OCI-LY7 (cell line): ENCODE measurements at regions of chr5 and their contacts with region 1.

Region 1: DNA sequence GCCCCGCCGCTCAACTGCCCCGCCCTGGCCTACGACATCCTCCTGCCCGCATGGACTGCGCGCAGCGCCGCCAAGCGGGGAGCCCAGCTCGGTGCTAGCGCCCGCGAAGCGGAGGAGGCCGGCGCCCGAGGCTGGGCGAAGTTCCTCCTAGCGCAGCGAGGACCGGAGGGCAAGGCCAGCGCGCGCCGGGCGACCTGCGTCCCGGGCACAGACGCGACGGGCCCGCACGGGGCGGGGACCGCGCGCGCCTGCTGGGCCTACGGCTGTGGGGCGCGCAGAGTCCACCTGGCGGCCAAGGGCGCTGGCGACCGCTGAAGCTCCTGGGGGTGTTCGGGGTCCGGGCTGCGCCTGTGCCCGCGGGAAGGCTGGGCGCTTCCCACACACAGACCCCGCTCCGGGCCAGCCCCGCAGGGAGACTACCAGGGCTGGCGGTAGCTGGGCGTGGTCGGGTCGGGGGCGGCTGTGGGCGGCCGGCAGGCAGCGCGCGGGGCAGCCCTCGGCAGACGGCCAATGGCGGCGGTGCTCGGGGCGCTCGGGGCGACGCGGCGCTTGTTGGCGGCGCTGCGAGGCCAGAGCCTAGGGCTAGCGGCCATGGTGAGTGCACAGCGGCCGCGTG is at the start of gene PCBD2:
- DNase-seq: peak; percentile 96
- H3K4me3 ChIP-seq: peak within 1 kb of the TSS; percentile 82
- H3K27ac ChIP-seq: peak within 1 kb of the TSS; percentile 93
- H3K4me1 ChIP-seq: peaks cover 41% of the 10 kb centered on the region
- CTCF ChIP-seq: peak; percentile 84
- total RNA-seq, gene PCBD2: 9.4 and 12.2 TPM in 2 replicates

Region 2: DNA sequence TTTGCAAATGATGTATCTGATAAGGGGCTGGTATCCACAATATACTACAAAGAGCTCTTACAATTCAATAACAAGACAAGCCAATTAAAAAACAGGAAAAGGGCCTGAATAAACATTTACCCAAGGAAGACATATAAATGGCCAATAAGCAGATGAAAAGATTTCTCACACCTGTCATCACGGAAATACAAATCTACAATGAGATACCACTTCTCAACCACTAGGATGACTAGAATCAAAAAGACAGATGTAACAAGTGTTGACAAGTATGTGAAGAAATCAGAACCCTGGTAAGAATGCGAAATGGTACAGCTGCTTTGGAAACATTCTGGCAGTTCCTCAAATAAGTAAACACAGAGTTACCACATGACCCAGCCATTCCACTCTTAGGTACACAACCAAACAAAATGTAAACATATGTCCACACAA is 1998.9 kb before region 1 on chr5:
- CTCF ChIA-PET with region 1: no interaction called
- POLR2A ChIA-PET with region 1: no interaction called
- intact Hi-C with region 1: no loop called
- DNase-seq: peak; percentile 15
- H3K4me3 ChIP-seq: no peak overlapping the region
- H3K27ac ChIP-seq: no peak overlapping the region
- H3K4me1 ChIP-seq: peaks cover 31% of the 10 kb centered on the region
- CTCF ChIP-seq: peak; percentile 31; the same call in 1 of the 2 replicates

Region 3: GRCh38 chr5:134527146-134527960 is 377.4 kb before region 1 on chr5:
- CTCF ChIA-PET with region 1: no interaction called
- POLR2A ChIA-PET with region 1: interaction called, 3 read pairs
- intact Hi-C with region 1: loop called (anchors 10 kb)
- DNase-seq: peak; percentile 88
- H3K4me3 ChIP-seq: peak overlapping the region; percentile 77
- H3K27ac ChIP-seq: peak overlapping the region; percentile 88
- H3K4me1 ChIP-seq: peaks cover 30% of the 10 kb centered on the region
- CTCF ChIP-seq: peak; percentile 82

Region 4: GRCh38 chr5:134603059-134603458 is 301.7 kb before region 1 on chr5:
- CTCF ChIA-PET with region 1: no interaction called
- POLR2A ChIA-PET with region 1: no interaction called
- intact Hi-C with region 1: no loop called
- DNase-seq: no peak
- H3K4me3 ChIP-seq: no peak overlapping the region
- H3K27ac ChIP-seq: no peak overlapping the region
- H3K4me1 ChIP-seq: no peaks in the 10 kb centered on the region
- CTCF ChIP-seq: no peak

Region 5: DNA sequence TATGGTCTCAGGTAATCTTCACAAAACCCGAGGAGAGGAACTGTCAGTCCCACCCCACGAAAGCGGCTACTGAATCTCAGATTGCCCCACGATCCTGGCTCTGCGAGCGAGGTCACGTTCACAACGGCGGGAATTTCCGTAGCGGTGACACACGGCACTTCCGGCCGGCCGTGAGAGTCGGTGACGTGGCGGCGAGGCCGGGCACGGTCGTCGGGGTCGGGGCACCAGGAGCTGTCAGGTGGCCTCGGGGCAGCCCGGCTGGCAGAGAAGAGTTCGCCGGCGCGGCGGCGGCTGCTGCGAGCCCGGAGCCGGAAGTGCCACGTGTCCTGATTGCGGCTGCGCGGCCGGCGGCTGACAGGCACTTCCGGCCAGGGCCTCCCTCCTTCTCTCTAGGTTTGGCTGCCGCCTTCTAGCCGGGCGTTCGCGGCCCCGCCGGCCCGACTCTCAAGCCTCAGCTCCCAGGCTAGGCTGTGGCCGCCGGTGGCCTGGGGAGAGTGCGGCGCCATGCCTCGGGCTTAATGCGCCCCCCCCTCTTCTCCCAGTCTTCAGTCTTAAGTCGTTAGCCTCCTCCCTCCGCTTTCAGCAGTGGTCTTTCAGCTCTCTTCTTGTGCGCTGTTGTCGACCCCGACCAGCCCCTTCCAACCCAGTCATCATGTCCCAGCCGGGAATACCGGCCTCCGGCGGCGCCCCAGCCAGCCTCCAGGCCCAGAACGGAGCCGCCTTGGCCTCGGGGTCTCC is 256.1 kb before region 1 on chr5 and contains the start of gene SEC24A:
- CTCF ChIA-PET with region 1: no interaction called
- POLR2A ChIA-PET with region 1: no interaction called
- intact Hi-C with region 1: loop called (anchors 5 kb)
- DNase-seq: peak; percentile 93
- H3K4me3 ChIP-seq: peak within 1 kb of the TSS; percentile 83
- H3K27ac ChIP-seq: peak within 1 kb of the TSS; percentile 95
- H3K4me1 ChIP-seq: peaks cover 31% of the 10 kb centered on the region
- CTCF ChIP-seq: no peak
- total RNA-seq, gene SEC24A: 5.5 and 5.6 TPM in 2 replicates

Region 6: DNA sequence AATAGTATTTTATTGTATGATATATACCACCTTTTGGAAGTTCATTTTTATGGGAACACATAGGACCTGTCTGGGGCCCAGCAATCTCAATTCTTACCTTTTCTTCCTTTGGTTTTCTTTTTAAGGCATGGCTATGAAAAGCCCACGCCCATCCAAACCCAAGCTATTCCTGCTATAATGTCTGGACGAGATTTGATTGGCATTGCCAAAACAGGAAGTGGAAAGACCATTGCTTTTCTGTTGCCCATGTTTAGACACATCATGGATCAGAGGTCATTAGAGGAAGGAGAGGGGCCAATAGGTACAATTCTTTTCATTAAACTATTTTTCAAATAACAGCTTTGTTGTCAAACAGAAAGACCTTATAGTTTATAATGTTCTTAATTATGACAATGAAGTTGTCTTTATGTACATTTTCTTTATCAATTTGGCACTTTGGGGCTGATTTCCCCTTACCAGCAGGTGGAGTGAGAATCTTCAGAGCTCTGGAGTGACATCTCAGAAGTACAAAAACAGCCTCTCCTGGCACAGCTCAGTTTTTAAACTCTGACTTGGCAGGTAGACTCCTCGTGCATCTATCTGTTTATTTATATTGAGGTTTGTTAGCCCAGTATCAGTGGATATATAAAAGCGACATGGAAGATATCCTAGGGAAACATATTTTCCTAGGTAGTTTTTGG is 120.4 kb before region 1 on chr5:
- CTCF ChIA-PET with region 1: no interaction called
- POLR2A ChIA-PET with region 1: no interaction called
- intact Hi-C with region 1: loop called (anchors 1 kb)
- DNase-seq: peak; percentile 26
- H3K4me3 ChIP-seq: no peak overlapping the region
- H3K27ac ChIP-seq: no peak overlapping the region
- H3K4me1 ChIP-seq: no peaks in the 10 kb centered on the region
- CTCF ChIP-seq: peak; percentile 66

Region 7: GRCh38 chr5:134833340-134834032 is 71.3 kb before region 1 on chr5:
- CTCF ChIA-PET with region 1: no interaction called
- POLR2A ChIA-PET with region 1: no interaction called
- intact Hi-C with region 1: no loop called
- DNase-seq: no peak
- H3K4me3 ChIP-seq: no peak overlapping the region
- H3K27ac ChIP-seq: no peak overlapping the region
- H3K4me1 ChIP-seq: no peaks in the 10 kb centered on the region
- CTCF ChIP-seq: no peak

Region 8: DNA sequence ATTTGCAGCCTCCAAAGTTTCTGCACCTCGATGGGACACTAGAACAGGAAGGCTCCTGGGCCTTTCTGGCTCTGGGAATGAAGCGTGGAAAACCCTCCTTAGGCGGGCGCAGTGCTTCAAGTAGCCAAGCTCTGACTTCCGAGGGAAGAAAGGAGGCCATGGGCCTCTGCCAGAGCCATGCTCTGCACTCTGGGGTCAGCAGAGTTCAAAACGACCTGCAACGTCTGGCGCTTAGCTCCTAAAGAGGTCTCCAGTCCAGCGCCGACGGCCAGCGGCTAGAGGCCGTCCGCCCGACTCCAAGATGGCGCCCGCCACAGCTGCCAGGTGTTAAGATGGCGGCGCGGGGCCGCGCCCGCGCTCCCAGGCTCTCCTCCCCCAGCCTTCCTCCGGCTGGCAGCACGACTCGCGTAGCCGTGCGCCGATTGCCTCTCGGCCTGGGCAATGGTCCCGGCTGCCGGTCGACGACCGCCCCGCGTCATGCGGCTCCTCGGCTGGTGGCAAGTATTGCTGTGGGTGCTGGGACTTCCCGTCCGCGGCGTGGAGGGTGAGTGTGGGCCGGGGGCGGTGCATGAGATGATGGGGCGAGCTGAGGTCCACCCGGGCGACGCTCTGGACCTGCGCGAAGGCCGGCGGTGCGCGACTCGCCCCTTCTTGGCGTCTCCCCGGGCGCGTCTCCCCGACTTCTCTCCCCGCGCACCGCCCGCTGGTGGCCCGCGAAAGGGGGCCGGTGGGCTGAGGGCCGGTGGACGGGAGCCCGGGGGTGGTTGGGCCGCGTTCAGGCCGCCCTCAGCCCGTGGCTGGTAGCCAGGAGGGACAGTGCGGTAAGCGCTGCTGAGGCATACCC is 30.5 kb before region 1 on chr5 and contains the start of gene TXNDC15:
- CTCF ChIA-PET with region 1: interaction called, 3 read pairs
- POLR2A ChIA-PET with region 1: interaction called, 10 read pairs
- intact Hi-C with region 1: loop called (anchors 1 kb)
- DNase-seq: peak; percentile 88
- H3K4me3 ChIP-seq: peak within 1 kb of the TSS; percentile 78
- H3K27ac ChIP-seq: peak within 1 kb of the TSS; percentile 54
- H3K4me1 ChIP-seq: peaks cover 38% of the 10 kb centered on the region
- CTCF ChIP-seq: no peak
- total RNA-seq, gene TXNDC15: 20.6 and 43.5 TPM in 2 replicates

Region 9: GRCh38 chr5:135053278-135053677 is 148.5 kb after region 1 on chr5:
- CTCF ChIA-PET with region 1: no interaction called
- POLR2A ChIA-PET with region 1: no interaction called
- intact Hi-C with region 1: loop called (anchors 2 kb)
- DNase-seq: peak; percentile 98
- H3K4me3 ChIP-seq: peak overlapping the region; percentile 61
- H3K27ac ChIP-seq: peak overlapping the region; percentile 97
- H3K4me1 ChIP-seq: peaks cover 98% of the 10 kb centered on the region
- CTCF ChIP-seq: no peak